ENCODE measurements at regions of chr6 and their contacts with region 1.

Region 1: DNA sequence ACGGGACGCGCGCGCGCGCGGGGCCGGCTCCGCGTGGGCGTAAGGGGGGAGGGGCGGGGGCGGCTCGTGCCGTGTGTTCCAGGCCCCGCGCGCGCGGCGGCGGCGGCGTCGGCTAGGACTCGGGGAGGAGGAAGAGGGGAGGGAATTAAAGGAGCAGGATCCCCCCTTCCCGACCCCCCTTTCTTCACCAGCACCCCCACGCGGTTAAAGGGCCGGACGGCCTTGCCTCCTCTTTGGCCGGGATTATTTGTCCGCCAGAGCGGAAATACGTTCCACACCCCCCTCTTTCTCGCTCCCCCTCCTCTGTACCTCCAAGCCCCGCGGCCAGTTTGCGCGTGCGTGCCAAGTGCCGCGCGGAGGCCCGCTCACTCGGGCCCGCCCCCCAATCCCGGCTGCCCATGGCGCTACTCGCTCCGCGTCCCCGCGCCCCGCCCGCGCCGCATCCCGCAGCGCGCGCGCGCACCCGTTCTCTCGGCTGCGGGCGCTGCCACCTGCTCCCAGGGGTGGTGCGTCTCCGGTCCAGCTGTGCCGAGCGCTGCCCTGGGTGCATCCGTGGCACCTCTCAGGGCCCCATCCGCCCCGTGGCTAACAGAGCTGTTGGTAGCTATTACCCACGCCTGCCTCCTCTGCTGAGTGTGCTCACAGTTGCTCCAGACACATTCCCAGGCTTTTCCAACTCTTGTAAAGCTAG is at the start of gene ZBTB12:
- DNase-seq: peak; percentile 76 to 95
- H3K4me3 ChIP-seq: peak within 1 kb of the TSS; percentile 65
- H3K27ac ChIP-seq: peak within 1 kb of the TSS; percentile 18; the same call in 1 of the 2 replicates
- H3K4me1 ChIP-seq: peaks cover 23% of the 10 kb centered on the region
- H3K27me3 ChIP-seq: no peaks in the 10 kb centered on the region
- CTCF ChIP-seq: no peak
- total RNA-seq, gene ZBTB12: 16.2 and 20.3 TPM in 2 replicates

Region 2: GRCh38 chr6:31639449-31639861 is 262.6 kb before region 1 on chr6:
- CTCF ChIA-PET with region 1: no interaction called
- POLR2A ChIA-PET with region 1: no interaction called
- intact Hi-C with region 1: no loop called
- DNase-seq: no peak
- H3K4me3 ChIP-seq: no peak overlapping the region
- H3K27ac ChIP-seq: no peak overlapping the region
- H3K4me1 ChIP-seq: no peaks in the 10 kb centered on the region
- H3K27me3 ChIP-seq: no peaks in the 10 kb centered on the region
- CTCF ChIP-seq: no peak

Region 3: GRCh38 chr6:31744422-31744821 is 157.7 kb before region 1 on chr6:
- CTCF ChIA-PET with region 1: no interaction called
- POLR2A ChIA-PET with region 1: no interaction called
- intact Hi-C with region 1: no loop called
- DNase-seq: no peak
- H3K4me3 ChIP-seq: no peak overlapping the region
- H3K27ac ChIP-seq: no peak overlapping the region
- H3K4me1 ChIP-seq: peaks cover 25% of the 10 kb centered on the region
- H3K27me3 ChIP-seq: no peaks in the 10 kb centered on the region
- CTCF ChIP-seq: no peak

Region 4: DNA sequence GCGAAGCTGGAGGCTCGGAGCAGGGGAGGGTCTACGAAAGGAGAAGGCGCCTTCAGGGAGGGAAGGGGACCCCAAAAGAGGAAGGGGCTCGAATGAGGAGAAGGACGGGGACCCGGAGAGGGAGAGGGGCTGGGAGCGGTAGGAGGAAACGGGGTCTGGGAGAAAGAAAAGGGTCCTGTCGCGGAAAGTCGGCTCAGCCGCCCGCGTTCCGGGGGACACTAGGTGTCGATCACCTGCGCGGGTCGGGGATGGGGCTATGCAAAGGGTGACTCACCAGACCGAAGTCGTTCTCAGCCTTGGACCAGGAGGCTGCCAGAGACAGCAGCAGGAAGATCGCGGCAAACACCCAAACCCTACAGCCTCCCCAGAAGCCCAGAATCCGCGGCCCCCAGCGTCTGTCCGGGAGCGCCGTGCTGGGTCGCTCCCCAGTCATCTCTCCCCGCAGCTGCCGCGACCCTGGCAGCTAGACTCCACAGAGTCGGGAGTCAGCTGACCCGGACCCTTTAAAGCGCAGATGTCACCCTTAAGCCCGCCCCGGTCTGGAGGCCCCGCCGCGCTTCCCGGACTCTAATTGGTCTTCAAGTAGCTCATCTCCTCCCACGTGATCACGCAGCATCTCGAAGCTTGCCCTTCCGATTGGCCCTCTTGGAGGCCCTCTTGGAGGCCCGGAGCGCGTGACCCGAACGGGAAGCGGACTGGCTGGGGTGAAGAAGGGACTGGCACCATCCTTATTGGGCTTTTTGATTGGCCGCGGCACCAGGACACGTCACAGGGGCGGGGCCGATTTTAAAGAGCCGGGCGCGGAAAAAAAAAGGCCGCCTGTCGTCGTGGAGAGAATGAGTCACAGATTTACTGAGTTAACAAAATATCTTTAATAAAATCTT is 39.5 kb before region 1 on chr6 and contains the start of gene NEU1:
- CTCF ChIA-PET with region 1: interaction called, 3 read pairs
- POLR2A ChIA-PET with region 1: interaction called, 16 read pairs
- intact Hi-C with region 1: no loop called
- DNase-seq: peak; percentile 99 to 100
- H3K4me3 ChIP-seq: peak within 1 kb of the TSS; percentile 65
- H3K27ac ChIP-seq: peak within 1 kb of the TSS; percentile 70
- H3K4me1 ChIP-seq: peaks cover 23% of the 10 kb centered on the region
- H3K27me3 ChIP-seq: no peaks in the 10 kb centered on the region
- CTCF ChIP-seq: no peak
- total RNA-seq, gene NEU1: 23.1 and 23.4 TPM in 2 replicates

Region 5: DNA sequence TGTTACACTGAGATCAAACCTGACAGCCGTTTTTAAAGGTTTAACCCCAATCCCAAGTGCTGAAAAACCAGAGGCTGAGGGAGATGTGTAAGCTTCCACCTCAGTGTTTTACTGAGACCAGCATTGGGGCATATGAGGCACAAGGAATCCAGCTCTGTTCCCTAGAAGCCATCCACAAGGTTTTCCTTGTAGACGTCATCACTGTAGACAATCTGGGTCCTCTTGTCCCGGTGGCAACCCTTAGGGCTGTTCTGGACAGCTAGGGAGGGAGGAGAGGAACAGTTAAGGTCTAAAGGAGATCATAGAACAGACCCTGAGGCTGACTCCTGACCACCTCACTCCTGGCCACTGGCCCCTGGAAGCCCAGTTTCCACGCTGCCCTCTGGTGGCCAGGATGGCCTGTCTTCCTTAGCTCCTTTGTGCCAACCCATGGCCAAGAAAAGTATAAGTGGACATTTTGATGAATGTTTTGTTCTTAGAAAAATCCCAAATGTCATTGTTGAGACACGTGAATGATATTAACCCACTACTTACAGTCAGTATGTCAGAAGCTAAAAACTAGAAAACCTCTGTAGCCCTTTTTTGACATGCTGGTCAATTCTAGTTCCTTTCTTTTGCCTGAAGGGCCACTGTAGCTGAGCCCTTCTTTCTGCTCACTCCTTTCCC is 50.2 kb after region 1 on chr6:
- CTCF ChIA-PET with region 1: interaction called, 4 read pairs
- POLR2A ChIA-PET with region 1: interaction called, 12 read pairs
- intact Hi-C with region 1: loop called (anchors 2 kb)
- DNase-seq: peak; percentile 36 to 67
- H3K4me3 ChIP-seq: no peak overlapping the region
- H3K27ac ChIP-seq: no peak overlapping the region; the same call in 1 of the 2 replicates
- H3K4me1 ChIP-seq: peaks cover 24% of the 10 kb centered on the region
- H3K27me3 ChIP-seq: no peaks in the 10 kb centered on the region
- CTCF ChIP-seq: peak; percentile 84

Region 6: DNA sequence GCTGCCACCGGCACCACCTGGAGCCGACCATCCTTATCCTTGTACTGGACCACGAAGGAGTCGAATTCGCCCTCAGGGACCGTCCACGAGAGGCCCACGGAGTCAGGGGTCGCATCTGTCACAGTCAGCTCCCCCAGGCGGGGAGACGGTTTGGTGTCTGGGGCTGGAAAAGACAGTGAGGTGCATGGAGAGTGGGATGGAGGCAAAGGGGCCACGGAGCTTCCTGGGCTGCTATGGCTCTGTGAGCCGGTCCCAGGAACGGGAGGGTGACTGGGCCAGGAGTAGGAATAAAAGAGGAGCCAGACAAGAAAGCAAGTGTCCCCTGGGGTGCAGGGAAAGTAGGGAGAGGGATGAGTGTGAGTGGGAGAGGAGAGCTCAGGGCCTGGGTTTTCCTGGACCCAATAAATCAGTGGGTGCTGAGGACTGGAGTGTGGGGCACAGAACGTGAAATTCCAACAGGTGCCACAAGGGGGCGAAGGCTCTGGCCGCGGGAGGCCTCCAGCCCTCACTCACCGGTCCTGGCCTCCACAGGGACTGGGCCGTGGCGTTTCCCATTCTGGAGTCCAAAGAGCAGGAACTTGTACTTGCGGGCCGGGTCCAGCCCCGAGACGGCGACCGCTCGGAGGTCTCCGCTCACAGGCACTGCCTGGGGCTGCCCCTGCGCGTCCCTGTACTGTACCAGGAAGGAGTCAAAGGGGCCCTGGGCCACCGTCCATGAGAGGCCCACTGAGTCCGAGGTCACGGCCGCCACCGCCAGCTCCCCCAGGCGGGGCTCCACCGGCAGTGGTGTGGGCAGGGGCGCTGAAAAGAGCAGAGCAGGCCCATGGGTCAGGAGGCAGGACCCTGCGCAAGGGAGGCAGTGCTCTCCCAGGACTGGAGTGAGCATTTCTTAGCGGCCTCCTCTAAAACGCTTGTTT is 146.0 kb after region 1 on chr6:
- CTCF ChIA-PET with region 1: no interaction called
- POLR2A ChIA-PET with region 1: no interaction called
- intact Hi-C with region 1: no loop called
- DNase-seq: peak; percentile 38 to 74
- H3K4me3 ChIP-seq: peak overlapping the region; percentile 46; the same call in 1 of the 2 replicates
- H3K27ac ChIP-seq: peak overlapping the region; percentile 91
- H3K4me1 ChIP-seq: peaks cover 30% of the 10 kb centered on the region
- H3K27me3 ChIP-seq: no peaks in the 10 kb centered on the region
- CTCF ChIP-seq: peak; percentile 81

Region 7: DNA sequence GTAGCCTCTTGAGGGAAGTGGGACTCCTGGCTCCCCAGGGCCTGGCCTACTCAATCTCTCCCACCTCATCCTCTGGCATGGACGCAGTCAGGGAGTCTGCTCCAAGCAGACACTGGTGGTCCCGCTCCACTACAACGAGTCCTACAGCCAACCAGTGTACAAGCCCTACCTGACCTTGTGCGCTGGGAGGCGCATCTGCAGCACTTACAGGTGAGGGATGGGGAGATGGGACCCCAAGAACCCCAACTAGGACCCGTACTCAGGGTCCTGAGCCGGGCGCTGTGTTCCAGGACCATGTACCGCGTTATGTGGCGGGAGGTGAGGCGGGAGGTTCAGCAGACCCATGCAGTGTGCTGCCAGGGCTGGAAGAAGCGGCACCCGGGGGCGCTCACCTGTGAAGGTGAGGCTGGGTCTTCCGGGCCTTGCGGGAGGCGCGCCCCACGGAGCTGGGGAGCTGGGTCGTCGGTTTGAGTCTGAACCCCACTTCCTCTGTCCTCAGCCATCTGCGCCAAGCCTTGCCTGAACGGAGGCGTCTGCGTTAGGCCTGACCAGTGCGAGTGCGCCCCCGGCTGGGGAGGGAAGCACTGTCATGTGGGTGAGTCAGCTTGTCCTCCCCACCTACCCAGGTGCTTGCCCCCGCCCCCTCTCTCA is 264.4 kb after region 1 on chr6:
- CTCF ChIA-PET with region 1: no interaction called
- POLR2A ChIA-PET with region 1: interaction called, 18 read pairs
- intact Hi-C with region 1: no loop called
- DNase-seq: no peak
- H3K4me3 ChIP-seq: no peak overlapping the region
- H3K27ac ChIP-seq: no peak overlapping the region
- H3K4me1 ChIP-seq: no peaks in the 10 kb centered on the region
- H3K27me3 ChIP-seq: no peaks in the 10 kb centered on the region
- CTCF ChIP-seq: no peak